Thyroid gland (tissue), 4 donors: ENCODE measurements at regions of chr1 and their contacts with region 1.

Region 1: GRCh38 chr1:110425612-110426152 is 18.2 kb upstream of the LAMTOR5 start:
- DNase-seq: peak; percentile 9 to 19
- H3K4me3 ChIP-seq: no peak overlapping the region
- H3K27ac ChIP-seq: no peak overlapping the region
- H3K4me1 ChIP-seq: no peaks in the 10 kb centered on the region
- H3K27me3 ChIP-seq: no peaks in the 10 kb centered on the region
- CTCF ChIP-seq: no peak
- POLR2A ChIP-seq: no peak

Region 2: DNA sequence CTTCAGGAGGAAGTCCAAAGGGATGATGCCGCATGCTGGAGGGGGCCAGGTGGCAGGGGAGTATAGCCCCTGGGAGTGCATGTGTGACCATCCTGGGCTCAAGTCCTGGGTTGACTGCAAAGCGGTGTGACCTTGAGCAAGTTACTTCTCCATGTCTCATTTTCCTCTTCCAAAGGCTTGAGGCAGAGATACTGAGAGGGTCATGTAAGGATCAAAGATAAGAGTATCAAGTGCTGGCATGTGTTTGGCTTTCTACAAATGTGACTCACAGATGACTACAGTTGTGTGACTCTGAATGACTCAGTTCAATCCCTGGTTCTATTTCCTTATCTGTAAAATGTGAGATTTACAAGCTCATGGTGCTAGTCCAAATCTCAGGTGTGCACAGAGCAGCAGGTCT is 51.4 kb after region 1 on chr1:
- intact Hi-C with region 1: loop called (anchors 5 kb)
- DNase-seq: no peak
- H3K4me3 ChIP-seq: no peak overlapping the region
- H3K27ac ChIP-seq: no peak overlapping the region
- H3K4me1 ChIP-seq: no peaks in the 10 kb centered on the region
- H3K27me3 ChIP-seq: no peaks in the 10 kb centered on the region
- CTCF ChIP-seq: no peak
- POLR2A ChIP-seq: no peak